GM12878 (cell line): ENCODE measurements at regions of chr12 and their contacts with region 1.

Region 1: GRCh38 chr12:27305673-27306456 is 26.8 kb upstream of the BMAL2 start:
- DNase-seq: no peak
- ATAC-seq: peak; percentile 26; the same call in 2 of the 3 replicates
- H3K4me3 ChIP-seq: no peak overlapping the region
- H3K27ac ChIP-seq: no peak overlapping the region
- H3K4me1 ChIP-seq: peaks cover 35% of the 10 kb centered on the region
- H3K27me3 ChIP-seq: no peaks in the 10 kb centered on the region
- CTCF ChIP-seq: peak in 1 of 3 experiments; percentile 15; a peak in 1 of 6 replicates
- EP300 ChIP-seq: no peak
- POLR2A ChIP-seq: no peak
- RAD21 ChIP-seq: peak; percentile 54; the same call in 1 of the 2 replicates

Region 2: GRCh38 chr12:27048822-27049752 is 256.8 kb before region 1 on chr12:
- CTCF ChIA-PET with region 1: interaction called, 4 read pairs
- POLR2A ChIA-PET with region 1: no interaction called
- RAD21 ChIA-PET with region 1: interaction called, 7 read pairs
- SMC1A ChIA-PET with region 1: interaction called, 11 read pairs
- in situ Hi-C with region 1: no loop called
- intact Hi-C with region 1: no loop called
- DNase-seq: no peak
- ATAC-seq: no peak
- H3K4me3 ChIP-seq: no peak overlapping the region
- H3K27ac ChIP-seq: no peak overlapping the region
- H3K4me1 ChIP-seq: no peaks in the 10 kb centered on the region
- H3K27me3 ChIP-seq: no peaks in the 10 kb centered on the region
- CTCF ChIP-seq: no peak
- EP300 ChIP-seq: no peak
- POLR2A ChIP-seq: no peak
- RAD21 ChIP-seq: no peak

Region 3: DNA sequence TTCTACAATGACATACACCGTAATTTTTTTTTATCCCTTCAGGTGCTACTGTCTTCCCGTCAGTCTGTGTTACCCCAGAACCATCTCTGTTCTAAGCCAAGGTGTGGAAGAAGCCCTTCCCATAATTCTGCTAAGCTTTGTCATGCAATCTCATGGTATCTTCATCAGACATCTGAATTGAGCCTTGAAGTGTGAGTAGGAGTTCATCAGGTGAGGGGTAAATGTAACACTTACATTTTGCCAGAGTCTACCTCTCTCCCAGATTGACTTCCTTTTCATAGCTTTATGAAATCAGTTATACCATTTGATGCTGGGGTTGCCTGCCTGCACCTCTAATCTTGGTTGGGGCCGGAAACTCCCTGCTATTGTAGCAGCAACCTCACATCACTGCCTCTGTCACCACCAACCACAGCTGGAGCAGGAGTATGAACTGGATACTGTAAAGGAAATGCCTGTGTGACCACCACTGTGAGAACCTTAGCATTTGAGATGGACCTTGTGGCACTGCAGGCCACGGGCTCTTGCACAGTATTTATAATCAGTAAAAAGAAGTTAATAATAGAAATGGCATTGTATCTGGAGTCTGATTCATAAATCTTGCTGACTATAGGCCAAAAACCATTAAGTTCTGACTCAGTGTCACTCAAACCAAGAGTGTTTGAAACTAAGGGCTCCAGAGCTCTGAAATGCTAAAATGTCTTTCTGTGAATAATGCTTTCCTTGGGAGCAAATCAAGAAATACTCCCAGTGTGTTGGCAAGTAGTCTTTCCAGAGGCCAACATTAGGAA is 120.4 kb before region 1 on chr12:
- CTCF ChIA-PET with region 1: interaction called, 26 read pairs
- POLR2A ChIA-PET with region 1: no interaction called
- RAD21 ChIA-PET with region 1: interaction called, 34 read pairs
- SMC1A ChIA-PET with region 1: interaction called, 13 read pairs
- in situ Hi-C with region 1: no loop called
- intact Hi-C with region 1: no loop called
- DNase-seq: peak; percentile 85
- ATAC-seq: peak; percentile 98
- H3K4me3 ChIP-seq: no peak overlapping the region
- H3K27ac ChIP-seq: peak overlapping the region; percentile 82
- H3K4me1 ChIP-seq: peaks cover 20% of the 10 kb centered on the region
- H3K27me3 ChIP-seq: no peaks in the 10 kb centered on the region
- CTCF ChIP-seq: no peak
- EP300 ChIP-seq: peak; percentile 24 to 61; a peak in 2 of 4 replicates
- POLR2A ChIP-seq: no peak
- RAD21 ChIP-seq: peak; percentile 23; the same call in 1 of the 2 replicates

Region 4: DNA sequence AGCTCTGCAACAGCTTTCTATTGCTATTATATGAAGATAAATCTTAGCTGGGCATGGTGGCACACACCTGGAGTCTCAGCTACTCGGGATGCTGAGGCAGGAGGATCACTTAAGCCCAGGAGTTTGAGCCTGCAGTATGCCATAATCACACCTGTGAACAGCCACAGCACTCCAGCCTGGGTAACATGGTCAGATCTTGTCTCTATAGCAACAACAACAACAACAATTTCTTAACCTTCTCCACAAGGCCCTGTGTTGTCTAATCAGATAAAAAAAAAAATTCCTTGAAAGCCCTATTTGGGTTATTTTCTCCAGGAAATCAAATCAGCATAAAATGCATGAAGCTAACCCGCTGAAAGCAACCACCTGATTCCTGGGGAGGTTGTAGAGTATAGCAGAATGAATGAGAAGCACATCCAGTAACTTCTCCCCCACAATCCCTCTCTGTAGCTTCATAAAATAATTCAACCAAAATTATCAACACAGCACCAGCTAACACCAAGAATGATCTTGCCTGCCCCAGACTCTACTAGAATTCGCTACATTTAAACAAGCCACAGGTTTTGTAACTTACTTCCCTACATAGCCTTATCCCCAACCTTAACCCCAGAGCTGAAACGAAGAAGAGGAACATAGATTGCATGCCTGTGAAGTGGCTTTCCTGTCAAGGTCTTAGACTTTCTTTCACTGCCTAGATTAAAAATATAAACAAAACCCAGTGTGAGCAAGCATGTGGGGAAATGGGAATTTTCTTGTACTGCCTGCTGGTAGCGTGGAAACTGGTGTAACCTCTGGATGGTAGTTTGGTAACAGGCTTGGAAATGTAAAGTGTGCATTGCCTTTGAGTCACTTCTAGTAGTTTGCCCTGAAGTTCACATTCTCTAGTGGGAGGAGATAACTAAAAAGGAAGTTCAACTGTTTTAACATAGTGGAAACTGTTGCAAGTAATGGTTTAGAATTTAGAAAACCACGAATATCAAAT is 67.8 kb before region 1 on chr12:
- CTCF ChIA-PET with region 1: interaction called, 179 read pairs
- POLR2A ChIA-PET with region 1: no interaction called
- RAD21 ChIA-PET with region 1: interaction called, 282 read pairs
- SMC1A ChIA-PET with region 1: interaction called, 269 read pairs
- in situ Hi-C with region 1: no loop called
- intact Hi-C with region 1: no loop called
- DNase-seq: peak; percentile 72
- ATAC-seq: peak; percentile 82
- H3K4me3 ChIP-seq: peak overlapping the region; percentile 31
- H3K27ac ChIP-seq: peak overlapping the region; percentile 82
- H3K4me1 ChIP-seq: peaks cover 32% of the 10 kb centered on the region
- H3K27me3 ChIP-seq: no peaks in the 10 kb centered on the region
- CTCF ChIP-seq: no peak
- EP300 ChIP-seq: peak in 1 of 2 experiments; percentile 40; a peak in 1 of 4 replicates
- POLR2A ChIP-seq: no peak
- RAD21 ChIP-seq: peak; percentile 7; the same call in 1 of the 2 replicates

Region 5: DNA sequence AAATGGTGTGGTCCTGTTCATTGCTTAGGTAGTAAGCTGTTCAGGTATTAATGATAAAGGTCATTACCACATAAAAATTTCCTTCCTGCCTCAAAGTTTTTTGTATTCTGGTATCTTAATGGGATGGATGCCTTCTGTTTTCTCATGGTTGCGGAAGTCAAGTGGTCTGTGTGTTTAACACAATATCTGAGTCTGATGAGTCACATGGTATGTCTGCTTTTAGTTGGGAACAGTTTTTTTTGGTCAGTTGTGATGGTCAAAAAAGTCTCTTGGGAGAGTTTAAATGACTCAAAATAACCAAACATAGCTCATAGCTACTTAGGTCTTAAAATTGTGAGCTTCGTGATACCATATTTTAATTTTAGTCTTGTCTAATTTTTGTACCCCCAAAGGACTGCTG is 21.1 kb before region 1 on chr12:
- CTCF ChIA-PET with region 1: interaction called, 125 read pairs
- POLR2A ChIA-PET with region 1: interaction called, 24 read pairs
- RAD21 ChIA-PET with region 1: interaction called, 215 read pairs
- SMC1A ChIA-PET with region 1: interaction called, 113 read pairs
- in situ Hi-C with region 1: no loop called
- intact Hi-C with region 1: no loop called
- DNase-seq: peak; percentile 89
- ATAC-seq: peak; percentile 67
- H3K4me3 ChIP-seq: no peak overlapping the region
- H3K27ac ChIP-seq: peak overlapping the region; percentile 70; the same call in 1 of the 2 replicates
- H3K4me1 ChIP-seq: peaks cover 28% of the 10 kb centered on the region
- H3K27me3 ChIP-seq: no peaks in the 10 kb centered on the region
- CTCF ChIP-seq: no peak
- EP300 ChIP-seq: peak; percentile 69 to 77; a peak in 3 of 4 replicates
- POLR2A ChIP-seq: no peak
- RAD21 ChIP-seq: no peak

Region 6: DNA sequence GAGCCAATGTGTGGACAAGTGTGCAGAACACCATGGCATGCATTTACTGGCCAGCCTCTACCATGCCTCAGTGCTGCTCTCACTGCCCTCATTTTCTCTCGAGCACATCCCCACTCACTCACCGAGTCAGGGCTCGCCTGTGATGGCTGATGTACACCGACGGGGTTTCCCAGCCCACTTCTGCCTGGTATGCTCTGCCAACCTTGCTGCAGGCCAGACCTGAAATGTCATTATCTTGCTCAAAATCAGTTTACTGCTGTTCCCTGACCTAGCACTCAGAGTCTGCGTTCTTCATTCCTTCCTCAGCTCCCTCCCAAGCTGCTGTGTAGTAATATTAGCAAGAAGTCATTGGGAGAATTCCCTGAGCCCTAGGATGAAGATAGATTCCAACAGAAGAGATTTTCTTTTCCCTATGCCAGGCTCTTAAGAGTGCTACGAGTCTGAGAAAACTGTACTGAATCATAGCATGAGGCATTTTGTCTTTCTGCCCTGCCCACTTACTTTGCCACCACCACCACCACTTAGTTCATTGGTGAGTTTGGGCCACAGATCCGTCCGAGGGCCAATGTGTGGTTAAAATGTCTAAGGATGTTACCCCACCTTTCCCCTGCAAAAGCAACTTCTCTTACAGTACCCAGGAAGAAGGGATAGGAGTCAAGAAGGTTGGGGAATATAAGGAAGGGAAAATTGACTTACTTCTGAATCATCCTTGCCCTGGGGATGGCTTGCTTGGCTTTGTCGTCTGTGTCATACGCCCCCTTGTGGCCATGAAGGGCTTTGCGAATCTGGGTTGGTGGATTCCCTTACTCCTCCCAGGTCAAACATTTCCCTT is 77.8 kb after region 1 on chr12:
- CTCF ChIA-PET with region 1: interaction called, 38 read pairs
- POLR2A ChIA-PET with region 1: interaction called, 6 read pairs
- RAD21 ChIA-PET with region 1: interaction called, 19 read pairs
- SMC1A ChIA-PET with region 1: interaction called, 55 read pairs
- in situ Hi-C with region 1: no loop called
- intact Hi-C with region 1: no loop called
- DNase-seq: peak; percentile 43
- ATAC-seq: peak; percentile 94
- H3K4me3 ChIP-seq: no peak overlapping the region
- H3K27ac ChIP-seq: no peak overlapping the region
- H3K4me1 ChIP-seq: no peaks in the 10 kb centered on the region
- H3K27me3 ChIP-seq: no peaks in the 10 kb centered on the region
- CTCF ChIP-seq: peak; percentile 84 to 95 (median 91)
- EP300 ChIP-seq: no peak
- POLR2A ChIP-seq: no peak
- RAD21 ChIP-seq: peak; percentile 83